ENCODE measurements at regions of chr2 and their contacts with region 1.

Region 1: GRCh38 chr2:172465417-172466334 is 38.3 kb downstream of the ITGA6 start:
- DNase-seq: peak; percentile 75 to 80 (median 77)
- H3K4me3 ChIP-seq: peak overlapping the region in 1 of 2 donors; percentile 1
- H3K4me3 Mint-ChIP-seq: peak overlapping the region in 7 of 8 donors; percentile 36 to 94 (median 72)
- H3K27ac ChIP-seq: peak overlapping the region; percentile 50
- H3K27ac Mint-ChIP-seq: peak overlapping the region; percentile 63 to 97 (median 90)
- H3K4me1 ChIP-seq: peaks cover 54% of the 10 kb centered on the region
- H3K4me1 Mint-ChIP-seq: peaks cover 45 to 63% (median 52%) of the 10 kb centered on the region in 4 donors
- H3K27me3 ChIP-seq: no peaks in the 10 kb centered on the region
- H3K27me3 Mint-ChIP-seq: no peaks in the 10 kb centered on the region

Region 2: DNA sequence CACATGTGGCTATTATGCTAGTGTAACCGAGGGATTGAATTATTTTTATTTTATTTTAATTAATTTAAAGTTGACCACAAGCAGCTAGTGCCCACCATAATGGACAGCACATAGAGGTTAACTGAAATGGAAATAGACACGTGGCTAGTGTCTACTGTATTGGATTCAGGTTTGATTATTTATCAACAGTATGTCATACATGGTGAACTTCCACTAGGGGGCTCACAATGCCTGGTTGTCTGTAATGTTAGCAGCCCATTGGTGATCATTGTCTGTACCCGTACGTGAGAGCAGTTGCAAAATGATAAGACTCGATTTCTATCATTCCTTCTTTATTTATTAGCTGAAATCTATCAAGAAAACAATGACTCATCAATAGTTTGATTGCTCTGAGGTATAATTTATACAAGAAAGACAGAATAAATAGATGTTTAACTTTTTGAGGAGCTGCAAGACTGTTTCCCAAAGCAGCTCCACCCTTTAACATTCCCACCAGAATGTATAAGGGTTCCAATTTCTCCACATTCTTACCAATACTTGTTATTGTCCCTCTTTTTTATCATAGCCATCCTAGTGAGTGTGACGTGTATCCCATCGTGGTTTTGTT is 866.9 kb before region 1 on chr2:
- CTCF ChIA-PET with region 1: interaction called, 3 read pairs
- POLR2A ChIA-PET with region 1: no interaction called
- intact Hi-C with region 1: loop called (anchors 1 kb)
- DNase-seq: peak; percentile 44 to 60 (median 54)
- H3K4me3 ChIP-seq: no peak overlapping the region
- H3K4me3 Mint-ChIP-seq: peak overlapping the region in 1 of 8 donors; percentile 47
- H3K27ac ChIP-seq: no peak overlapping the region
- H3K27ac Mint-ChIP-seq: no peak overlapping the region
- H3K4me1 ChIP-seq: no peaks in the 10 kb centered on the region
- H3K4me1 Mint-ChIP-seq: peaks cover 0 to 4% (median 2%) of the 10 kb centered on the region in 4 donors
- H3K27me3 ChIP-seq: no peaks in the 10 kb centered on the region
- H3K27me3 Mint-ChIP-seq: peaks cover 0 to 2% of the 10 kb centered on the region in 2 donors

Region 3: DNA sequence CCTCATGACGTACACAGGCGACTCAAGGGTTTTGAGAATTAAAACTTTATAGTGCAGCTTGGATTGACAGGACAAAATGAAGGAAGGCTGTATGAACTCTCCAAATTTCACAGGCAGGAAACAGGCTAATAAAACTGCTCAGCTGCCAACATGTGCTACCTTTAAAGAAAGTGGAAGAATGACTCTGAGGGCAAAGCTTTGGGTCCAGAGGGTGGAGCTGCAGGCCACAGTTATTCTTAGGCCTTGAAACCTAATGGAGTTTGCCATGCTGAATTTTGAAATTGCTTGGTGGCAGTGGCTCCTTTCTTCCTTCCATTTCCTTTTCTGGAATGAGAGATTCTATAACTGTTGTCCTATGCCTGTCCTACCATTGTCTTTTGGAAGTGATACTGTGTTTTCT is 508.6 kb before region 1 on chr2:
- CTCF ChIA-PET with region 1: no interaction called
- POLR2A ChIA-PET with region 1: no interaction called
- intact Hi-C with region 1: loop called (anchors 5 kb)
- DNase-seq: peak in 1 of 5 donors; percentile 7
- H3K4me3 ChIP-seq: no peak overlapping the region
- H3K4me3 Mint-ChIP-seq: no peak overlapping the region
- H3K27ac ChIP-seq: no peak overlapping the region
- H3K27ac Mint-ChIP-seq: no peak overlapping the region
- H3K4me1 ChIP-seq: peaks cover 13% of the 10 kb centered on the region
- H3K4me1 Mint-ChIP-seq: peaks cover 15 to 28% (median 21%) of the 10 kb centered on the region in 4 donors
- H3K27me3 ChIP-seq: no peaks in the 10 kb centered on the region
- H3K27me3 Mint-ChIP-seq: no peaks in the 10 kb centered on the region

Region 4: DNA sequence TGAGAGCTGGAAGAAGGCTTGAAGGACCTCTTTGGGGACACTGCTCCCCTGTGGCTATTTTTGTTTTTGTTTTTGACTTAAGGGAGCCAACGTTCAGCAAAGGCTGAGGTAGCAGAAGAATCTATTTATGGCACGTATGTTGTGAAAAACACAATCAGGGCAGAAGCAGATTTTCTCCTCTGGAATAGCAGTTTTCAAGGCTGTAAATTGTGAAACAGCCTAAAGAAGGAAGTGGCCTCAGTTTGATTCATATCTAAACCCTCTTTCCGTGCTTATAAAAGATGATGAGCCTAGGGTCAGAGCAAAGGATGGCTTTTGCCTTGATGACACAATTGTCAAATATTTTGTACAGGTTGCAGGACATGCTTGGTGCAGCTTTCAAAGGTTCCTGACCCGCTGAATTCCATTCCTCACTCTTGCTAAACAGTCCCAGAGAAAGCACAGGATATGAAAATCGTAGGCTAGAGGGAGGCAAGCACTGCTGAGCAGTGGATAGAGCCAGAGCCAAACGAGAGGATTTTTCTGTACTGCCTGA is 256.8 kb before region 1 on chr2:
- CTCF ChIA-PET with region 1: interaction called, 14 read pairs
- POLR2A ChIA-PET with region 1: no interaction called
- intact Hi-C with region 1: no loop called
- DNase-seq: no peak
- H3K4me3 ChIP-seq: no peak overlapping the region
- H3K4me3 Mint-ChIP-seq: no peak overlapping the region
- H3K27ac ChIP-seq: no peak overlapping the region
- H3K27ac Mint-ChIP-seq: no peak overlapping the region
- H3K4me1 ChIP-seq: peaks cover 6% of the 10 kb centered on the region
- H3K4me1 Mint-ChIP-seq: peaks cover 4 to 19% (median 12%) of the 10 kb centered on the region in 4 donors
- H3K27me3 ChIP-seq: no peaks in the 10 kb centered on the region
- H3K27me3 Mint-ChIP-seq: peaks cover 0 to 2% of the 10 kb centered on the region in 2 donors

Region 5: GRCh38 chr2:172339371-172340010 is 126.2 kb before region 1 on chr2:
- CTCF ChIA-PET with region 1: interaction called, 28 read pairs
- POLR2A ChIA-PET with region 1: interaction called, 11 read pairs
- intact Hi-C with region 1: loop called (anchors 2 kb)
- DNase-seq: peak in 3 of 5 donors; percentile 4 to 10 (median 6)
- H3K4me3 ChIP-seq: no peak overlapping the region
- H3K4me3 Mint-ChIP-seq: peak overlapping the region; percentile 32 to 87 (median 78)
- H3K27ac ChIP-seq: no peak overlapping the region
- H3K27ac Mint-ChIP-seq: peak overlapping the region in 5 of 7 donors; percentile 1 to 91 (median 71)
- H3K4me1 ChIP-seq: peaks cover 19% of the 10 kb centered on the region
- H3K4me1 Mint-ChIP-seq: peaks cover 18 to 24% (median 22%) of the 10 kb centered on the region in 4 donors
- H3K27me3 ChIP-seq: no peaks in the 10 kb centered on the region
- H3K27me3 Mint-ChIP-seq: peaks cover 0 to 2% of the 10 kb centered on the region in 2 donors

Region 6: GRCh38 chr2:172484253-172484652 is 18.6 kb after region 1 on chr2:
- CTCF ChIA-PET with region 1: interaction called, 38 read pairs
- POLR2A ChIA-PET with region 1: interaction called, 3 read pairs
- intact Hi-C with region 1: loop called (anchors 1 kb)
- DNase-seq: peak in 4 of 5 donors; percentile 25 to 34 (median 32)
- H3K4me3 ChIP-seq: no peak overlapping the region
- H3K4me3 Mint-ChIP-seq: no peak overlapping the region
- H3K27ac ChIP-seq: no peak overlapping the region
- H3K27ac Mint-ChIP-seq: peak overlapping the region in 5 of 7 donors; percentile 23 to 76 (median 66)
- H3K4me1 ChIP-seq: peaks cover 6% of the 10 kb centered on the region
- H3K4me1 Mint-ChIP-seq: peaks cover 26 to 51% (median 34%) of the 10 kb centered on the region in 4 donors
- H3K27me3 ChIP-seq: no peaks in the 10 kb centered on the region
- H3K27me3 Mint-ChIP-seq: no peaks in the 10 kb centered on the region

Region 7: GRCh38 chr2:172821370-172822347 is 356.0 kb after region 1 on chr2:
- CTCF ChIA-PET with region 1: no interaction called
- POLR2A ChIA-PET with region 1: no interaction called
- intact Hi-C with region 1: no loop called
- DNase-seq: no peak
- H3K4me3 ChIP-seq: no peak overlapping the region
- H3K4me3 Mint-ChIP-seq: no peak overlapping the region
- H3K27ac ChIP-seq: no peak overlapping the region
- H3K27ac Mint-ChIP-seq: no peak overlapping the region
- H3K4me1 ChIP-seq: no peaks in the 10 kb centered on the region
- H3K4me1 Mint-ChIP-seq: no peaks in the 10 kb centered on the region
- H3K27me3 ChIP-seq: no peaks in the 10 kb centered on the region
- H3K27me3 Mint-ChIP-seq: peaks cover 3 to 8% of the 10 kb centered on the region in 2 donors